MCF 10A (cell line): ENCODE measurements at regions of chr1 and their contacts with region 1.

Region 1: DNA sequence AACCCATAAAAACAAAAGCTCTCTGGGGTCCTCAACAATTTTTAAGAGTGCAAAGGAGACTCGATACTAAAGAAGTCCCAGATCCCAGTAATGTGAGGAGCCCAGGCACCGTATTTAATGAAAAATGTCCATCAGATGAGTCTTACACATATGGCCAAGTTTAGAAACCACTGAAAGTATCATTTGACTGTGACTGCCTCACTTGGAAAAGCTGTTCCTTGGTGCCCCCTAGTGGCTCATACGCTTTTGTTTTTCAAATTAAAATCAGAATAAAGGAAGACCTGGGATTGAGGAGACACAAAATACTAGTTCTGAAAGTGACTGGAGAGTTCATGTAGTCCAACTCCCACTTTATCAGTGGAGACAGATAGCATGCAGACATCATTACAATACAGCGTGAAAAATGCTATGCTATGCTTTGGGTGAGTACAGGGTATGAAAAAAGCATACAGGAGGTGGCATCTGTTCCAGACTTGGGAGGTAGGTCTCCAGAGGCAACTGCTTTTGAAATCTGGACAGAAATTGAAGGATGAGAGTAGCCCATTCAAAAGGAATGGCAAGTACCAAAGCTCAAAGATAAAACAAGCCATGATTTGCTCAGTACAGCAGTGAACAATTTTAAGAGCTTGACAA is 33.8 kb downstream of the GDAP2 start:
- DNase-seq: peak; percentile 78
- H3K4me3 Mint-ChIP-seq: no peak overlapping the region
- H3K27ac Mint-ChIP-seq: no peak overlapping the region
- H3K4me1 Mint-ChIP-seq: no peaks in the 10 kb centered on the region
- H3K27me3 Mint-ChIP-seq: no peaks in the 10 kb centered on the region
- CTCF ChIP-seq: peak; percentile 69

Region 2: DNA sequence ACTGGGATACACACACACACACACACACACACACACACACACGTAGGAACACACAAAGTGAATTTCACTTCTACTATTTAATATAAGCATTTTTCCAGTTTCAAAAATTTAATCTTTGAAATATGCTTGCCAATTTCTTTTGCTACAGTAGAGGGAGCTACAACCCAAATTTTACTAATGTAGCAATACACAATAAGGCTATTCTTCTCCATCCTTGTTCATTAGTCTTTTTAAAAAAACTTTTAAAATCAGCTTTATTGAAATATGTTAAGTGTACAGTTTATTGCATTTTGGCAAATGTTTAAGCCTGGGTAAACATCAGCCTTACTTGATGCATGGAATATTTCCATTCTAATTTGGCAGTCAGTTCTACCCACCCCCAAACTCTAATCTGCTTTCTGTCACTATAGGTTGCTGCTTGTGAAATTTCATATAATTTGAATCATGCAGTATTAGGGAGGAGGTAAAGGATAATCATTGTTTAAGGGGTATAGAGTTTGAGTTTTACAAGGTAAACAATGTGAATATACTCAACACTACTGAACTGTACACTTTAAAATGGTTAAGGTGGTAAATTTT is 382.8 kb before region 1 on chr1:
- CTCF ChIA-PET with region 1: interaction called, 26 read pairs
- POLR2A ChIA-PET with region 1: interaction called, 3 read pairs
- intact Hi-C with region 1: loop called (anchors 1 kb)
- DNase-seq: peak; percentile 32
- H3K4me3 Mint-ChIP-seq: no peak overlapping the region
- H3K27ac Mint-ChIP-seq: no peak overlapping the region
- H3K4me1 Mint-ChIP-seq: no peaks in the 10 kb centered on the region
- H3K27me3 Mint-ChIP-seq: no peaks in the 10 kb centered on the region
- CTCF ChIP-seq: peak; percentile 53

Region 3: DNA sequence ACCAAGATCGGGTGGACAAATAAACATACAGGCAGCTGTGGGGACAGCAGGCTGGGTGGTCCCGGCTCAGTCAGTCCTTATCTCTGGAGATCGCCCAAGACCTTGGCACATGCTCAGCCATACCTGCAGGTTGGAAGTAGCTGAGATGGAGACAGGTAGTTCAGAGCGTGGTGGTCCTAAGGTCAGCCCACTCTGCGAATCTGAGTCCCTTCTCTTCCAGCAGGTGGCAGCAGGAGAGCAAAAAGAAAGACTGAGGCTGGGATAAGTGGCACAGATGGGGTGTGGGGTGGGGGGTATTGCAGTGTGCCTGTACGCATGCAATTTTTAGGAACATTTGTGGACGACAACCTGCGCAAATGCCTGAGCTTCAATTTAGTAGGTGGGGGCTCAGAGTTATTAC is 184.9 kb before region 1 on chr1:
- CTCF ChIA-PET with region 1: no interaction called
- POLR2A ChIA-PET with region 1: no interaction called
- intact Hi-C with region 1: loop called (anchors 1 kb)
- DNase-seq: peak; percentile 7
- H3K4me3 Mint-ChIP-seq: no peak overlapping the region
- H3K27ac Mint-ChIP-seq: no peak overlapping the region
- H3K4me1 Mint-ChIP-seq: no peaks in the 10 kb centered on the region
- H3K27me3 Mint-ChIP-seq: no peaks in the 10 kb centered on the region
- CTCF ChIP-seq: no peak

Region 4: GRCh38 chr1:117852853-117853553 is 42.6 kb before region 1 on chr1:
- CTCF ChIA-PET with region 1: no interaction called
- POLR2A ChIA-PET with region 1: no interaction called
- intact Hi-C with region 1: no loop called
- DNase-seq: no peak
- H3K4me3 Mint-ChIP-seq: no peak overlapping the region
- H3K27ac Mint-ChIP-seq: no peak overlapping the region
- H3K4me1 Mint-ChIP-seq: peaks cover 5% of the 10 kb centered on the region
- H3K27me3 Mint-ChIP-seq: no peaks in the 10 kb centered on the region
- CTCF ChIP-seq: no peak

Region 5: DNA sequence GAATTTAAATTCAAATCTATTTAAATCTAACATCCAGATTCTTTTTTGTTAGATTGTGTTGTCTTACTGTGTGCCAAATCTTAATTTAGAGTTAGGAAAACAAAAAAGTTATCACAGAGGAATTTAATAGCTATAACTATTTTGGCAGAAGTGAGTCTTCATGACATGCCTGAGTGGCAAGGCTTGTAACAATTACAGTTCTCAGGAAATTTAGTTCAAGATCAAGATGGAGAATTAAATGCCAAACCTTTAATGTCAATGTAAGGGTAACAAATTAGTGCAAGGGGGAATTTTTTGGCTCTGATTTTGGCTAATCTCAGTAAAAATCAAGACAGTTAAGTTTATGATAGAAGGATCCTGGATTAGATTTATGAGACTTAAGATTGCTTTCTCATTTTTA is 24.6 kb before region 1 on chr1:
- CTCF ChIA-PET with region 1: interaction called, 10 read pairs
- POLR2A ChIA-PET with region 1: no interaction called
- intact Hi-C with region 1: no loop called
- DNase-seq: no peak
- H3K4me3 Mint-ChIP-seq: no peak overlapping the region
- H3K27ac Mint-ChIP-seq: no peak overlapping the region
- H3K4me1 Mint-ChIP-seq: no peaks in the 10 kb centered on the region
- H3K27me3 Mint-ChIP-seq: no peaks in the 10 kb centered on the region
- CTCF ChIP-seq: no peak